ENCODE measurements at regions of chr4 and their contacts with region 1.

Region 1: DNA sequence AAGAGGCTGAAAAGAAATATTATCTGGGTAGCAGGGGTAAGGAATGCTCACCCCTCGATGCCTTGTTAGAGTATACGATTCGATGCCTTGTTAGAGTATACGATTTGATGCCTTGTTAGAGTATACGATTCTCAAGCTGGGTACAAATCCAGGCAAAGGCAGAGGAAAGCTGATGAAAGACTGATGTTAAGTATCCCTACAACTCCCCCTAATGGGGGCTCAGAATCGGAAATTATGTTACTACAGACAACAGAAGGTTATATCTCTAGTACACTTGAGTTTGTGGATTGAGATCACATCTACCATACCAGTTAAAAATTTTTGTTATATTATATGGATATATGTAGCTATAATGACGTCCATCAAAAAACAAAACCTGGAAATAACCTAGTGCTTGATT is 4.8 kb downstream of the LRRC66 start:
- DNase-seq: no peak
- ATAC-seq: peak; percentile 77 to 79 (median 78)
- H3K4me3 ChIP-seq: no peak overlapping the region
- H3K27ac ChIP-seq: no peak overlapping the region
- H3K4me1 ChIP-seq: no peaks in the 10 kb centered on the region
- H3K27me3 ChIP-seq: no peaks in the 10 kb centered on the region
- CTCF ChIP-seq: peak in 3 of 4 donors; percentile 37 to 46 (median 38)
- POLR2A ChIP-seq: no peak

Region 2: DNA sequence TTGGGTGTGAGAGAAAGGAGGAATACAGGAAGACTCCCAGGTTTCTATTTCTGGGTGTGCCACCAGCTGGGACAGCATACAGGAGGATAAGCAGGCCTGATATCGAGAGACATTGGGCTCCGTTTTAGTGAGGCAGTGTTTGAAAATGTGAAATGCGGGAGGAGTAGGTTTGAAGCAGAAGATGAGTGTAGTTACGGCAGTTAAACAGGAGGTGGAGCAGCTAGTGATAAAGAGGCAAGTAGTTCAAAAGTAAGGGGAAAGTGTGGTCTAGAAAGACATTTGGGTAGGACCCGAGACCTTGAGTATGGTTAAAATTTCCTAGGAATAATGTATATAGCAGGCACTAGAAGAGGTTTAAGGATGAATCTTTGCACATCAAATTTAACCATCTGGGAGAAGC is 130.0 kb before region 1 on chr4:
- intact Hi-C with region 1: loop called in 1 of 2 experiments (anchors 10 kb)
- DNase-seq: no peak
- ATAC-seq: peak; percentile 69 to 83 (median 74)
- H3K4me3 ChIP-seq: no peak overlapping the region
- H3K27ac ChIP-seq: no peak overlapping the region
- H3K4me1 ChIP-seq: peaks cover 0 to 36% (median 3%) of the 10 kb centered on the region in 4 donors
- H3K27me3 ChIP-seq: no peaks in the 10 kb centered on the region
- CTCF ChIP-seq: peak; percentile 31 to 53 (median 50)
- POLR2A ChIP-seq: no peak